Right ventricle myocardium inferior (tissue), 1 donor: ENCODE measurements at regions of chr9 and their contacts with region 1.

Region 1: DNA sequence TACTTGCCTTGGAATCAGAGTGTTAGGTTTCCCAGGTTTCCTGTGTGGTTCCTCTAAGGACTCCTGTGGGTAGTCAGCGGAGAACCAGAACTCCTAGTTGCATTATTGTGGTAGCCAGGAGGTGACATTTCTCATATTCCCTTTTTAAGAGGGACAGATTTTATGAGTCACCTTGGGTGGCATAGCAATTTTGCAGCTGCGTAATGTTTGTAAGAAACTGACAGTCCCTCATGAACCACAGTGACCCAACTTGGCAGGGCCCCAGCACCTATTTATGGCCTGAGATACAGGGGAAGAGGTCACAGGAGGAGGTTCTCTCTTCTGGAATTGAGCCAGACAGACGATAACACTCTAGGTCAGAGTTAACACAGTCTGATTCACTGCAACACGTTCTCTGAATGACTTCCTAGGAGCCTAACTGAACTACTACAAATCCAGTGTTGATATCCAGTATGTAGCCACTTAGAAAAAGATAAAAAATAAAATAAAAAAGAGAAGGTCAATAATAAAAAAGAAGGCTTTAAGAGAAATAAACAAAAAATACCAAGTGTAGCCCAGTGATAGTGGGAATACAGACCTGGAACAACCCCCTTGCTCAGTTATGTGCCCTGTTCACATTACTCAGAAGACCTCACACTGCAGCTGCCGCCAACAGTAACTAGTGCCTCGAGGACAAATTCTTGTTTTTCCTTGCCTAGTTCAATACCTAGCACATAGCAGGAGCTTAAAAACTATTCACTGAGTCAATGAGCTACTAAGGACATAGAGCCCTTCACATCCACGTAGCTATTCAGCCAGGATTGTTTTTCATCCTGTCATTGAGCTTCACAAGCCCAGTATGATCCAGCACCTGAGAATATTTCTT is 50.7 kb upstream of the VLDLR start:
- DNase-seq: peak; percentile 92
- ATAC-seq: peak; percentile 90

Region 2: GRCh38 chr9:2427120-2427891 is 143.5 kb before region 1 on chr9:
- intact Hi-C with region 1: loop called (anchors 5 kb)
- DNase-seq: peak; percentile 75
- ATAC-seq: peak; percentile 90

Region 3: DNA sequence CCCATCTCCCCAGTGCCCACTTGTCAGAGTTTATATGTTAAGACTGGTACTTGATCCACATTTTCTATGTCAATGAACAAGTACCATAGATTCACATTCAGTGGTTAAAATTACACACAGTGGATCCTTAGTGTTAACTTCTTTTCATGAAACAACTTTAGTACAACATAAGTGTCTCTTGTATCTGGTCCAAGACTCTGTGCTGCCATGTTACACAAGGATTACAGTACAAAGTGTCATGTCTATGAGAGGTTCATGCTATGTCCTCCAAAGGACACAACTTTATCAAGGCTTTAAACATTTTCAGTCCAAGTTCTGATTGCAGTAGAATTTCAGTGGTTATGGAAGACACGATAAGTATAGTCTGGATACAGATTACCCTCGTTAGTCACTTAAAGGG is 37.4 kb after region 1 on chr9:
- intact Hi-C with region 1: loop called (anchors 5 kb)
- DNase-seq: no peak
- ATAC-seq: peak; percentile 27

Region 4: GRCh38 chr9:2662496-2662895 is 91.6 kb after region 1 on chr9:
- intact Hi-C with region 1: loop called (anchors 5 kb)
- DNase-seq: no peak
- ATAC-seq: no peak